Mammary epithelial cell (primary cell): ENCODE measurements at regions of chr7 and their contacts with region 1.

Region 1: GRCh38 chr7:141731476-141732149 is 6.5 kb upstream of the SSBP1 start:
- DNase-seq: no peak
- H3K4me3 ChIP-seq: no peak overlapping the region
- H3K27ac ChIP-seq: no peak overlapping the region
- H3K4me1 ChIP-seq: no peaks in the 10 kb centered on the region
- H3K27me3 ChIP-seq: no peaks in the 10 kb centered on the region
- CTCF ChIP-seq: no peak

Region 2: DNA sequence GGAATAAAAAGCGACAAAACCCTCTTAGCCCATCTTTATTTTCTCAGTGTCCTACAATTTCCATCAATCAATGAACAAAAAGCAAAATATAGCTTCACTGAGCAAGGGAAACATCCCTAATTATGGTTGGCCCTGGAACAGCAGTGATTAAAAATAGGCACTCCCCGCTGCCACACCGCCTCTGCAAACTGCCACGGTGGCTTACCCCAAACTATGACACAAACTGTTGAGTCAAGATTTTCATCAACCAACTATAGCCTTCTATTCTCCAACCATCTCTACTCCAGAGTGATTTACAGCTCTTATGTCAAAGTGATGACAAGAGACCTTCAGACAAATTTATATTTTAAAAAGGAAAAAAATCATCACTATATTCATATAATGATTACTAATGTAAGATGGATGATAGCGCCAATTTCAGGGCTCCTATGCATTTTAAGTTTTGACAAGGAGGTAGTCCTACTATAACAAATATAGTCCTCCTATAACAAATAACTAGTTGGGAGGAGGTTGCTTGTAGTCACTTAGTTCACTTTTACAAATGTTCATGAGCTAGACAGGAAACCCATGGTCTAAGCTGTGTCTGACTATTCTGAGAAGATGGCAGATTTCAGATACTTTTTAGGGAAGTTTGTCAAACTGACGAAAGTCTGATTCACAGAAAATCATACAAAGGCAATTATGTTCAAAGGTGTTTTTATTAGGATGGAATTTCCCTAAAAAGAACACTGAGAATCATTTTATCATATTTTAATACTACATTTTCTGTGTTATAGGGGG is 56.0 kb before region 1 on chr7:
- CTCF ChIA-PET with region 1: no interaction called
- dilution Hi-C with region 1: loop called (anchors 5 kb)
- in situ Hi-C with region 1: no loop called
- intact Hi-C with region 1: no loop called
- DNase-seq: no peak
- H3K4me3 ChIP-seq: no peak overlapping the region
- H3K27ac ChIP-seq: no peak overlapping the region
- H3K4me1 ChIP-seq: peaks cover 25% of the 10 kb centered on the region
- H3K27me3 ChIP-seq: no peaks in the 10 kb centered on the region
- CTCF ChIP-seq: no peak